ENCODE measurements at regions of chr12 and their contacts with region 1.

Region 1: DNA sequence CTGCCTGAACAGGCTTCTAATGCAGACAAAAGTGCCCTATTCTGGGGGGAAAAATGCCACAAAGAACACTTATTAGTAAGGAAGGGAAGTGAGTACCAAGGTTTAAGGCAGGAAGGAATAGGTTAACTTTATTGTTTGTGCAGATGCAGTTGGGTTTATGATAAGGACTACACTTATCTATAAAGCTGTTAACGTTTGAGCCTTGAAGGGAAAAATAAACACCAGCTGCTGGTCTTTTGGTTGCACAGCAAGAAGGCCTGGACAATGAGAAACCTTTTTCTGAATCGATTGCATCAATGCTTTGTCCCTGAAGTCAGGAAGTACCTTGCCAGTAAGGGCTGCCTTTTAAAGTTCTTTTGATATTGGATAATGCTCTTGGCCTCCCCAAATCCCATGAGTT is 407.8 kb downstream of the ATP23 start:
- DNase-seq: no peak
- H3K4me3 ChIP-seq: no peak overlapping the region
- H3K4me3 Mint-ChIP-seq: no peak overlapping the region
- H3K27ac ChIP-seq: no peak overlapping the region
- H3K27ac Mint-ChIP-seq: no peak overlapping the region
- H3K4me1 ChIP-seq: no peaks in the 10 kb centered on the region
- H3K4me1 Mint-ChIP-seq: no peaks in the 10 kb centered on the region
- H3K27me3 ChIP-seq: no peaks in the 10 kb centered on the region
- H3K27me3 Mint-ChIP-seq: peaks cover 3 to 11% of the 10 kb centered on the region in 2 donors

Region 2: GRCh38 chr12:58202933-58203718 is 146.0 kb before region 1 on chr12:
- CTCF ChIA-PET with region 1: no interaction called
- POLR2A ChIA-PET with region 1: no interaction called
- DNase-seq: no peak
- H3K4me3 ChIP-seq: no peak overlapping the region
- H3K4me3 Mint-ChIP-seq: no peak overlapping the region
- H3K27ac ChIP-seq: no peak overlapping the region
- H3K27ac Mint-ChIP-seq: no peak overlapping the region
- H3K4me1 ChIP-seq: no peaks in the 10 kb centered on the region
- H3K4me1 Mint-ChIP-seq: no peaks in the 10 kb centered on the region
- H3K27me3 ChIP-seq: no peaks in the 10 kb centered on the region
- H3K27me3 Mint-ChIP-seq: peaks cover 3 to 22% of the 10 kb centered on the region in 2 donors

Region 3: DNA sequence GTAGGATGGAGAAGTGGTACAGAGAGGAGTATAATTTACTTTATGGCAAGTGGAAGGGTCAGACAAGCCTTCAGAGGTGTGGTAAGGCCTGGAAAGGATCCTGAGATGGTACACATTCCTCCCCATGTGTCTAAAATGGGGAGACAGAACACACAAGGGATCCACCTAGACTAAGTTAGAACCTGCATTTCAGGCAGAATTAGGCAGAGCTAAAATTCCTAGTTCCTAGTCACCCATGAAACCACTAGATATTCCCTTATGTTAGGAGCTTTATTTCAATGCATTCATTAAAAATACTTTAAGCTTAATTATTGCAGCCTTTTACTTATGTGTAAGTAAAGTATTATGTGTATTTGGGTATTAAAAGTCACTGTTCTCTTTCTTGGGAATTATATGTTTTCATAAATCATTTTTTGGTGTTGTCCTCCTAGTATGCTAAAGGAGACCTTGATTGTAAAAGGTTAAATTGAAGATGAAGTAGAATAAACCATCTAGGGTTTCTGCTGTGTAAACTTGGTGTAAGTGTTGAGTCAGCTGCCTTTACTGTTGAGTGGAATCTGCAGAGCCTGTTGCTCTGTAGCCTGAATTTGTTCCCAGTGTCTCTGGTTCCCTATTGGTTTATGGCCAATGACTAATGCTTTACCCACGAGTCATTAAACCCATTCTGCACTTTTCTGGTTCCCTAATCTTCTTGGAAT is 15.4 kb after region 1 on chr12:
- CTCF ChIA-PET with region 1: no interaction called
- POLR2A ChIA-PET with region 1: no interaction called
- DNase-seq: no peak
- H3K4me3 ChIP-seq: no peak overlapping the region
- H3K4me3 Mint-ChIP-seq: no peak overlapping the region
- H3K27ac ChIP-seq: no peak overlapping the region
- H3K27ac Mint-ChIP-seq: no peak overlapping the region
- H3K4me1 ChIP-seq: no peaks in the 10 kb centered on the region
- H3K4me1 Mint-ChIP-seq: no peaks in the 10 kb centered on the region
- H3K27me3 ChIP-seq: no peaks in the 10 kb centered on the region
- H3K27me3 Mint-ChIP-seq: peaks cover 3 to 6% of the 10 kb centered on the region in 2 donors

Region 4: DNA sequence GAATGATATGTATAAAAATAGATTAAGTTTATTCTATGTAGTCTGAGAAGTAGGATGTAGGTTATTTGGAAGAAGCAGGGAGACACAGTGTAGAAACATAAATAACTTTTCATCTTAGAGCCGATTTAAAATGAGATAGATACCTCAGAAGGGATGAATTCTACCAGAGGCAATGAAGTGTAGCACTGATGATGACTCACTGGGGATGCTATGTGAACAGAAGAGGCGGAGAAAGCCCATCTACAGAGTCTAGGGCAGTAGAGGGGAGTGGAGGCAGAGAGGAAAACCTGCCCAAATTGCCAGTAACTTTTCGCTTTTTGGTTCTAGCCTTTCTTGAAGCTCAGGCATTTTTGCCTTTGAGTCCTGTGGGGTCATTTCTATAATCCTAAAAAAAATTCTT is 44.0 kb after region 1 on chr12:
- CTCF ChIA-PET with region 1: no interaction called
- POLR2A ChIA-PET with region 1: interaction called, 11 read pairs
- DNase-seq: no peak
- H3K4me3 ChIP-seq: no peak overlapping the region
- H3K4me3 Mint-ChIP-seq: no peak overlapping the region
- H3K27ac ChIP-seq: no peak overlapping the region
- H3K27ac Mint-ChIP-seq: no peak overlapping the region
- H3K4me1 ChIP-seq: no peaks in the 10 kb centered on the region
- H3K4me1 Mint-ChIP-seq: no peaks in the 10 kb centered on the region
- H3K27me3 ChIP-seq: no peaks in the 10 kb centered on the region
- H3K27me3 Mint-ChIP-seq: peaks cover 0 to 1% of the 10 kb centered on the region in 2 donors

Measured in CD8-positive, alpha-beta memory T cell (primary cell).